Activated B cell treated with CpG ODN at 0.5 μM for 24 hours (primary cell): ENCODE measurements at regions of chr13 and their contacts with region 1.

Region 1: DNA sequence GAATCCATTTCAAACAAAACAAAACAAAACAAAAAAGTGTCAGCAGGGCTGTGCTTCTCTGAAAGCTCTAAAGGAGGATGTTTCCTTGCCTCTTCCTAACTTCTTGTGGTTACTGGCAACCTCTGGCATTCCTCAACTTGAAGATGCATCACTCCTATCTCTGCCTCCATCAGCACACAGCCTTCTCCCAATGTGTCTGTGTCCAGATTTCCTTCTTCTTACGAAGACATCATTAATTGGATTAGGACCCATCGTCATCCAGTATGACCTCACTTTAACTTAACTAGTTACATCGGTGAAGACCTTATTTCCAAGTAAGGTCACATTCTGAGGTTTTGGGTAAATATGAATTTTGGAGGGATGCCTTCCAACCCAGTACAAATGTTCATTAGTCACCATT is 33.8 kb upstream of the GTF2F2 start:
- DNase-seq: no peak
- ATAC-seq: no peak
- H3K4me3 Mint-ChIP-seq: no peak overlapping the region
- H3K27ac Mint-ChIP-seq: no peak overlapping the region
- H3K4me1 Mint-ChIP-seq: no peaks in the 10 kb centered on the region
- H3K27me3 Mint-ChIP-seq: no peaks in the 10 kb centered on the region
- CTCF ChIP-seq: no peak

Region 2: GRCh38 chr13:45239396-45239795 is 152.9 kb after region 1 on chr13:
- CTCF ChIA-PET with region 1: no interaction called
- POLR2A ChIA-PET with region 1: interaction called, 11 read pairs
- intact Hi-C with region 1: no loop called
- DNase-seq: no peak
- ATAC-seq: no peak
- H3K4me3 Mint-ChIP-seq: no peak overlapping the region
- H3K27ac Mint-ChIP-seq: no peak overlapping the region
- H3K4me1 Mint-ChIP-seq: no peaks in the 10 kb centered on the region
- H3K27me3 Mint-ChIP-seq: no peaks in the 10 kb centered on the region
- CTCF ChIP-seq: no peak